Dendritic cell treated with granulocyte-macrophage colony-stimulating factor and Interleukin-4, amounts not matched to agents 40 ng/mL and 50 ng/mL, for 4 days (primary cell): ENCODE measurements at regions of chr11 and their contacts with region 1.

Region 1: GRCh38 chr11:18280438-18281045 is 14.5 kb downstream of the SAA1 start:
- H3K4me3 Mint-ChIP-seq: peak overlapping the region; percentile 32
- H3K27ac Mint-ChIP-seq: peak overlapping the region; percentile 76
- H3K4me1 Mint-ChIP-seq: peaks cover 63% of the 10 kb centered on the region
- H3K27me3 Mint-ChIP-seq: no peaks in the 10 kb centered on the region

Region 2: GRCh38 chr11:18294862-18295261 is 14.3 kb after region 1 on chr11:
- intact Hi-C with region 1: loop called (anchors 2 kb)
- H3K4me3 Mint-ChIP-seq: no peak overlapping the region
- H3K27ac Mint-ChIP-seq: peak overlapping the region; percentile 63
- H3K4me1 Mint-ChIP-seq: peaks cover 36% of the 10 kb centered on the region
- H3K27me3 Mint-ChIP-seq: no peaks in the 10 kb centered on the region

Region 3: DNA sequence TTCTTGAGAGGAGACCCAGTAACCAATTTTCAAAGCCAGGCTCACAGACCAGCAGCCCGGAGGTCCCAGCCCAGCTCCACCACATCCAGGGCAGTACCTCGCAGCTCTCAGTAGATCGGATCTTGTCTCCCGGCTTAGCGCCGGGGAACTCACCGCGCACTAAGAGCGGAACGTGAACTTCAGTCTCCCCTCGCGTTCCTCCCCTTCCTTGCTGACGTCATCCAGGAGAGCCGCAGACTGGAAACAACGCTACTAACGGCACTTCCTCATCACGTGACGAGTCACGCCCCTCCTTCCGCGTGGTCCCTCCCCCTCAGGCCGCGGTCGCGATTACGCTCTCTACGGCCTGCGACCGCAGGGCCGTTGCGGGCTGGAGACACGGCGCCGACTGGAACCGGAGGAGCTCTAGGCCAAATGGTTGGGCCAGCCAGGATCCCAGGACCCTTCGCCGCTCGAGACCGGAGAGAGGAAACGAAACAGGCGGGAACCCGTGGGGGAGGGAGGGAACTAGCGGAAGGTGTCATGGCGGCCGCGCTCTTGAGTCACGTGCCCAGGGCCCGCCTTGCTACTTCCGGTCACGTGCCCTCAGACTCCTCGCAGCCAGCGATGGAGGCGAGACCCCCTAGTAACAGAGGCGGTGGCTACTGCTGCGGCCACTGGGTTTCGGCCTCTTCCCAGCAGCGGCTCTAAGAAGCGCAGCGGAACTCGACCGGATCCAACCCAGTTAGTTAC is 41.6 kb after region 1 on chr11 and contains the starts of genes GTF2H1 and HPS5:
- intact Hi-C with region 1: loop called (anchors 5 kb)
- H3K4me3 Mint-ChIP-seq: peak within 1 kb of the TSS; percentile 92
- H3K27ac Mint-ChIP-seq: peak within 1 kb of the TSS; percentile 98
- H3K4me1 Mint-ChIP-seq: peaks cover 71% of the 10 kb centered on the region
- H3K27me3 Mint-ChIP-seq: no peaks in the 10 kb centered on the region